A549 (cell line): ENCODE measurements at regions of chr7 and their contacts with region 1.

Region 1: DNA sequence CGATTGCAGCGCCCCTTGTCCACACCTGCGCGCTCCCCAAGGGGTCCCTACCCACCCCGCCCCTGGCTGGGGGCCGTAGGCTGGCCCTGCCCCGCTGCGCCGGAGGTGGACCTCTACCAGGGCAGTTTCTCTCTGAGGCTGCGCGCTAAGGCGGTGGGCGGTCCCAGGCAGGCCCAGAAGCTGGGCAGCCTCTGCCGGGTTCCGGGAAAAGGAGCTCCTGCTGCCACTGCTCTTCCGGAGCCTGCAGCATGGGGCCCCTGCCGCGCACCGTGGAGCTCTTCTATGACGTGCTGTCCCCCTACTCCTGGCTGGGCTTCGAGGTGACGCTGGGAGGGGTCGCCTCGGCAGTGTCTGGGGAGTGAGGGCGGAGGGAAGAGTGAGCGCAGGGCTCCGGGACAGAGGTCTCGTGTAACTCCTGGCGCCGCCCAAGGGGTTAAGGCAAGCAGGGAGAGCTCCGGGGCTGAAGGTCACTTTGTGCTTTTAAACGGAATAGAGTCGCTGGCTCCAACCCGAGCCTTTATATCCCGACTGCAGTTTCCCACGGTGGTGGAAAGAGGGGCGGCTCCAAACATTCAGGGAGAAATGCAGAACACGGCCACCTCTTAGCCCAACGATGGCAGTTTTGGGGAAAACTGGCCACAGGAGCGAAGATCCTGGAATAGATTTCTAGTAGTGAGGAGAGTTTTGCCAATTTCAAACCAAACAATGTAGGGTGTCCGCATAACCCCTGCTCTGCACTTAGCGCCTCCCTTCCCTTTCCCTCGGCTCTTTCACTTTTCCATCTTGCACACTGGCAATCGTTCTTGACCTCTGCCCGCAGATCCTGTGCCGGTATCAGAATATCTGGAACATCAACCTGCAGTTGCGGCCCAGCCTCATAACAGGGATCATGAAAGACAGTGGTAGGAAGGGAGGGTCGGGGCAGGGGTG is at the start of gene GSTK1:
- DNase-seq: peak; percentile 64 to 89
- ATAC-seq: peak; percentile 99 to 100
- H3K4me3 ChIP-seq: peak within 1 kb of the TSS; percentile 81
- H3K27ac ChIP-seq: peak within 1 kb of the TSS; percentile 88 to 90
- H3K4me1 ChIP-seq: peaks cover 18% of the 10 kb centered on the region
- CTCF ChIP-seq: no peak
- EP300 ChIP-seq: no peak
- POLR2A ChIP-seq: peak; percentile 98
- RAD21 ChIP-seq: no peak
- polyA plus RNA-seq, gene GSTK1: 76.6 and 96.5 TPM in 2 replicates

Region 2: GRCh38 chr7:143287935-143288826 is 24.6 kb after region 1 on chr7 and contains the start of gene CASP2:
- CTCF ChIA-PET with region 1: interaction called, 3 read pairs
- POLR2A ChIA-PET with region 1: interaction called, 19 read pairs
- DNase-seq: peak; percentile 98
- ATAC-seq: peak; percentile 91 to 94
- H3K4me3 ChIP-seq: peak within 1 kb of the TSS; percentile 91
- H3K27ac ChIP-seq: peak within 1 kb of the TSS; percentile 96 to 99
- H3K4me1 ChIP-seq: peaks cover 34% of the 10 kb centered on the region
- CTCF ChIP-seq: 0 out of 3 replicates have a peak, but pooled peaks have one; percentile 8
- EP300 ChIP-seq: no peak
- POLR2A ChIP-seq: peak; percentile 75
- RAD21 ChIP-seq: no peak
- polyA plus RNA-seq, gene CASP2: 24.6 and 26.0 TPM in 2 replicates